ENCODE measurements at regions of chr14 and their contacts with region 1.

Region 1: GRCh38 chr14:68816262-68816942 is 23.5 kb upstream of the ZFP36L1 start:
- DNase-seq: peak; percentile 96

Region 2: GRCh38 chr14:67837011-67837624 is 979.3 kb before region 1 on chr14:
- intact Hi-C with region 1: loop called (anchors 5 kb)
- DNase-seq: no peak

Region 3: DNA sequence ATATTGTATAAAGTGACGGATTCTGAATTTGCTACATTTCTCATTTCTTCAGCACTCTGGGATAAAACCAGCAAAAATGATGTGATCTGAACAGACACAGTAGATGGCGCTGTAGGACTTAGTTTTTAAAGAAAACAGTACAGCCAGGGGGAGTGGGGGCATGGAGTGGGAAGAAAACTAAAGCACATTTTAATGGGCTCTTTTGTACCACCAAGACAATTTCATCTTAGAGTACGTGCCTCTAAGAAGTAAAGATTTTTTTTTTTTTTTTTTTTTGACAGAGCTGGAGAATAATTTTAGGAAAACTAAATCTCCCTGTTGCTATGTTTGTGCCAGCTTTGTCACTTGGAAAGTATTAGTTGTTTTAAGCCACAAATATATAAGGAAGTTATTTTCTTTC is 872.5 kb before region 1 on chr14:
- intact Hi-C with region 1: loop called (anchors 1 kb)
- DNase-seq: no peak

Region 4: GRCh38 chr14:68140111-68140741 is 676.2 kb before region 1 on chr14:
- intact Hi-C with region 1: loop called (anchors 10 kb)
- DNase-seq: no peak

Region 5: DNA sequence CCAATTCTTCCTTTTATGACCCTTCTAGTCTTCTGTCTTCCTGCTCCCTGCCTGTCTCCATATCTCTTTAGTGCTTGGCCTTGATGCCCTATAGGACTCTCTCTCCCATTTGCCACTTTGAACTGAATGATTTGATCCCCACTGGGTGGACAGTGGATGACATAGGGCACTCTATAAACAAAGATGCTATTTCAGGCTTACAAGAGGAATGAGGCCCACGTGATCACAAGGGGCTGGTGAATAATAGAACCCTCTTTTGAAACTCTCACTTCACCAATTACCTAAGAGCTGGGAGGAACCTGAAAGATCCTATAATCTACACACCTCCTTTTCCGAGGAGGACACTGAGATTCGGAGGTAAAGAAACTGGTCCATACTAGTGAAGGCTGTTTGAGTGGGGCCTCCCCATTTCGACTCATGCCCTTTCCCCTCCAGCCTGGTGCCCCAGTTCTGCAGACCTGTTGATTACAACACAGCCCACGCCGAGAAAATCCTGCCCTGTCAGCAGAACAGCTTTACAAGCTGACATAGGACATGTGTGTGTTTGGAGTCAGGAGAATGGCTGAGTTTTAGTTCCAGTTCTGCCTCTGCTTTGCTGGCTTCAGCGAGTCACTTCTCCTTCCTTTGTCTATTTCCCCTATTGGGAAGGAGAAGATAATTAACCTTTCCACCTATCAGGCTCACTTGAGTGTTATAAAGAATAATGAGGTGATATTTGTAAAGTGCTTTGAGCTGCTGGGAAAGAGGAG is 423.8 kb before region 1 on chr14:
- intact Hi-C with region 1: loop called (anchors 5 kb)
- DNase-seq: no peak

Region 6: DNA sequence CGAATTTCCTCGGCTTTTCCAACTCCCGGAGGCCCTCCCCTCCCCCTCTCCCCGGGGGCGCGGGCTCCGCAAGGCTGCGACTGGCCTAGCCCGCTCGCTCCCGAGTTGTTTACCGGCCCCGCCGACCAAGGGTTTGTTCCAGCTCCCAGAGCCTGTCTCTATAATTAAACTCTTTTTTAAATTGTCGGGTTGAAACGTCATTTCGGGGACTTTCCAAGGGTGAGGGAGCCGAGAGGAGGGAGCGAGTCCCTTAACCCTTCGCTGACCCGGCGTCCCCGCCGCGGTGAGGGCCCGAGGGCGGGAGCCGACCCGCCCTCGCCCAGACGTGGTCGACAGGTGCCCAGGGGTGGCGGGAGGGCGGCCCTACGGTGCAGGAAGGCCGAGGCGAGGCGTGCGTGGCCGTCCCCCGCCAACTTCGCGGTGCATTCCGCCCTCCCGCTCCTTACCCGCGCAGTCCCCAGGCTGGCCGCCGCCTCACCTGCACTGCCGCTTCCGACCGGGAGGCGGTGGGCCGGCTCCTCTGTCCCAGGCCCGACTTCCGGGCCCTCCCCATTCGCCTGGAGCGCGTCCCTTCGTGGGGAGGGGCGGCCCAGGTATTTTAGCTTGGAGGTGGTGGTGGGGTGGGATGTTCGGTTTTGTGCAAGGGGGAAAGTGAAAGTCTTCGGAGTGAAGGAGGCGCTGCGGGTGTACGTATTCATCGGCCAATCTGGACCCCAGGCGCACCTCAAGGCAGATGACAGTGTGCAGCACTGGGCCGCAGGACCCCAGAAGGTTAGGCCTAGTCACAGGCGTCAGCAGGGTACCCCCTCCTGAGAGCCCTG is 20.6 kb before region 1 on chr14:
- intact Hi-C with region 1: loop called (anchors 1 kb)
- DNase-seq: peak; percentile 93

Region 7: GRCh38 chr14:68884031-68885030 is 67.9 kb after region 1 on chr14:
- intact Hi-C with region 1: no loop called
- DNase-seq: no peak